Panc1 (cell line): ENCODE measurements at regions of chr7 and their contacts with region 1.

Region 1: GRCh38 chr7:116271963-116272839 is 61.9 kb downstream of the TES start:
- DNase-seq: peak; percentile 98
- ATAC-seq: peak; percentile 96
- H3K4me3 ChIP-seq: peak overlapping the region in 1 of 2 experiments; percentile 21; a peak in 3 of 4 replicates
- H3K27ac ChIP-seq: peak overlapping the region; percentile 100
- H3K4me1 ChIP-seq: peaks cover 46% of the 10 kb centered on the region
- H3K27me3 ChIP-seq: no peaks in the 10 kb centered on the region
- CTCF ChIP-seq: no peak

Region 2: GRCh38 chr7:116316833-116317612 is 44.8 kb after region 1 on chr7:
- CTCF ChIA-PET with region 1: no interaction called
- POLR2A ChIA-PET with region 1: interaction called, 3 read pairs
- in situ Hi-C with region 1: no loop called
- intact Hi-C with region 1: loop called (anchors 5 kb)
- DNase-seq: peak; percentile 99
- ATAC-seq: peak; percentile 97
- H3K4me3 ChIP-seq: peak overlapping the region; percentile 1 to 17; a peak in 3 of 4 replicates
- H3K27ac ChIP-seq: peak overlapping the region; percentile 97
- H3K4me1 ChIP-seq: peaks cover 29% of the 10 kb centered on the region
- H3K27me3 ChIP-seq: no peaks in the 10 kb centered on the region
- CTCF ChIP-seq: no peak

Region 3: DNA sequence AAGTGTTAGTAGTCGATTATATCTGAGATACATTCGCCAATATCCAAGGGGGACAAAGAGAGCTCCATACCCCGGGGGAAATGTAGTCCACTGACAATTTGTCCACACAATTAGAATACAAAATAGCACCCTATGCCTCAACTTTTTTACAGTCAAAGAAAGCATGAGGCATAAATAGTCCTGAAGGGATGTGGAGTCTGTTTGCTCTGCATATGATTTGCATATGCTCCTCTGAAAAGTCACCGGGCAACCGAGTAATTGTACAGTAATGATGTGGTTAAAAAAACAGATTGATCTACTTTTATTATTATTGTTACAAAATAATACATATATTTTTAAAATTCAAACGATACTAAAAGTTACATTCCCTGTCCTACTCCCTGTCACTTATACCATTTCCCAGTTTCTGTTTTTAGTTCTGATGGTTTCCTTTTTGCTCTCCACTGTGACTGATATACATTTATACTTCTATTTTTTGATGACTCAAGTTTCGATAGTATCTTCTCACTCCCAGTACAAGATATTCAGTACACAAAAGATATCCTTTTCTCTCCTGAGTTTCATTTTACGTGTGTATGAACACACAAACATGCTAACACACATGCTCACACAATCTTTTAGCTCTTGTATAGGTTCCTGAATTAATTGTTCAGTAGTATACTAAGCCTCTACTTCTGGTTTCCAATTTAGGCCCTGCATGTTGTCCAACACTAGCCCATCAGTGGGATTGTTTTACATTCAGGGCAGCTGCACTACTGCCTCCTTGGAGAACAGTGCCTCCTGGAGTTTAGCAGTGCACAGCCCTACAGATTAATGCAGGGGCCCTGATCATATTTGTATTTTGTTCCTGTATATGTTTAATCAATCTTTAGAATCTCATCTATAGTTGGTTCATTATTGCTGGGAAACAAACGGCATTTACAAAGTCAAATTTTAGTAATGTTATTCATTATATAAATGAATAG is 69.0 kb after region 1 on chr7:
- CTCF ChIA-PET with region 1: no interaction called
- POLR2A ChIA-PET with region 1: no interaction called
- in situ Hi-C with region 1: no loop called
- intact Hi-C with region 1: loop called (anchors 5 kb)
- DNase-seq: no peak
- ATAC-seq: peak; percentile 81
- H3K4me3 ChIP-seq: no peak overlapping the region
- H3K27ac ChIP-seq: peak overlapping the region; percentile 96
- H3K4me1 ChIP-seq: peaks cover 23% of the 10 kb centered on the region
- H3K27me3 ChIP-seq: no peaks in the 10 kb centered on the region
- CTCF ChIP-seq: peak; percentile 85

Region 4: DNA sequence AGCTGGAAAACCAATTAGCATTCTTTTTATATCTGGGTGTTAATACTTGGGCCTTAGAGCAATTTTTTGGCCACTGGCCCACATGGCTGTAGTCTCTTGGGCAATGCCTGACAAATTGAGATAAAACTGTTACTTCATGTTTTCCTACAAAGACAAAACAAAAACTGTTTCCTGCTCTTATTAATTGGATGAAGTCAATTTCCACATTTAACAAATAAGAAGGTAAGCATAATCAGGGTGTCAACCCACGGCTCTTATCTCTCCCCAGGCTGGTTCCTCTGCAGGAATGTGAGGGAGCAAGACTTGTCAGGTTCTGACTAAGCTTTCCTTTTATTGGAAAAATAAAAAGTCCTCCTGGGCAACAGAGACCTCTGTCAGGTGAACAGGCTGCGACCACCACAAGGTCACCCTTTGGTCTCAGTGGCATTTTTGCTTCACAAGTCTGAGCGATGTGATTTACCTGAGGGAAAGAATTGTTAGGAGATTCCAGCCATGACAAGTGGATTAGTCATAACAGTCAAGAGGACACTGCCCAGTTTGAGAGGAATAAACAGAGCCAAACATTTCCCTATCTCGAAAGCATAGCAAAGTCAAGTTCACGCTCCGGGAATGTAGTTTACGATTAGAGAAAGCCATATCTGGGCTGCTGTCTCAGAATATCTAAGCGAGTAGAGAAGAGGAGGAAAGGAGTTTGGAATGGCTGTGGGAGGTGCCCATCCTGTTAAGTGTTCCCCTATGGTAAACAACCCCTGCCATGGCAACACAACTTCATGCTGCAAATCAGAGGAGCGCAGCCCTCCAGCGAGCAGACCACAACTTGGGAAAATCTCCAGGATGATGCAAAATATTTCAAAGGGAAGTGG is 82.6 kb after region 1 on chr7:
- CTCF ChIA-PET with region 1: no interaction called
- POLR2A ChIA-PET with region 1: interaction called, 5 read pairs
- in situ Hi-C with region 1: no loop called
- intact Hi-C with region 1: loop called (anchors 5 kb)
- DNase-seq: peak; percentile 98
- ATAC-seq: peak; percentile 92
- H3K4me3 ChIP-seq: peak overlapping the region; percentile 12 to 49
- H3K27ac ChIP-seq: peak overlapping the region; percentile 100
- H3K4me1 ChIP-seq: peaks cover 49% of the 10 kb centered on the region
- H3K27me3 ChIP-seq: no peaks in the 10 kb centered on the region
- CTCF ChIP-seq: no peak

Region 5: DNA sequence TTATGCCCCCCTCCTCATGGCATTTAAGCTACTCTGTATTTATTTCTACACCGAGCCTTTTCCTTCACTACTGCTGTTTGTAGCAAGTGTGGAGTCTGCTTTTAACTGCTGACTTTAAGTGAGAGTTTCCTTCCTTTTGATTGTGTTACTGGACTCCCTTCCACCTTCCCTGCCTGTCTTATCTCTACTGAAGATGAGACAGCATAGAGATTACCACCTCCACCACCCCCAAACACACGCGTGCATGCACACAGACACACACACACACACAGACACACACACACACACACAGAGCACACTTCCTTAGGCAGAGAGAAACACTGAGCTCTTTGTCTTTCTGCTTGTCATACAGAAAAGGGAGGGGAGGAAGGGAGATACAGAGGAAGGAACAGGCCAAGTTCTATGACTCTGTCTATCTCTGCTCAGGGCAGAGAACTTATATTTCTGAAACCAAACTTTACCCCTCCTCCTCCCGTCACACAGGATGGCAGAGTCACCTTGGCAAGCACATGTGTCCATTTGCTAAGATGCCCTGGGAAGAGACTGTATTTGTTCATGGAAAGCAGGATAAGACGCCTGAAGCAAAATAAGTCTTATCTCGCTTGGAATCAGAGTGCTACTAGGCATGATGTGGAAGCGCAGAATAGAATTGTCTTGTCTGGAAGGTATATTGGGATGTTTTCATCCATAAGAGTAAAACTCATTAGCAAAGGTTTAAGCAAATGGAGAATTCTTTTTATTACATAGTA is 145.6 kb after region 1 on chr7:
- CTCF ChIA-PET with region 1: no interaction called
- POLR2A ChIA-PET with region 1: no interaction called
- in situ Hi-C with region 1: no loop called
- intact Hi-C with region 1: loop called (anchors 5 kb)
- DNase-seq: no peak
- ATAC-seq: peak; percentile 84
- H3K4me3 ChIP-seq: peak overlapping the region in 1 of 2 experiments; percentile 30; a peak in 1 of 4 replicates
- H3K27ac ChIP-seq: peak overlapping the region; percentile 94
- H3K4me1 ChIP-seq: peaks cover 41% of the 10 kb centered on the region
- H3K27me3 ChIP-seq: no peaks in the 10 kb centered on the region
- CTCF ChIP-seq: no peak

Region 6: DNA sequence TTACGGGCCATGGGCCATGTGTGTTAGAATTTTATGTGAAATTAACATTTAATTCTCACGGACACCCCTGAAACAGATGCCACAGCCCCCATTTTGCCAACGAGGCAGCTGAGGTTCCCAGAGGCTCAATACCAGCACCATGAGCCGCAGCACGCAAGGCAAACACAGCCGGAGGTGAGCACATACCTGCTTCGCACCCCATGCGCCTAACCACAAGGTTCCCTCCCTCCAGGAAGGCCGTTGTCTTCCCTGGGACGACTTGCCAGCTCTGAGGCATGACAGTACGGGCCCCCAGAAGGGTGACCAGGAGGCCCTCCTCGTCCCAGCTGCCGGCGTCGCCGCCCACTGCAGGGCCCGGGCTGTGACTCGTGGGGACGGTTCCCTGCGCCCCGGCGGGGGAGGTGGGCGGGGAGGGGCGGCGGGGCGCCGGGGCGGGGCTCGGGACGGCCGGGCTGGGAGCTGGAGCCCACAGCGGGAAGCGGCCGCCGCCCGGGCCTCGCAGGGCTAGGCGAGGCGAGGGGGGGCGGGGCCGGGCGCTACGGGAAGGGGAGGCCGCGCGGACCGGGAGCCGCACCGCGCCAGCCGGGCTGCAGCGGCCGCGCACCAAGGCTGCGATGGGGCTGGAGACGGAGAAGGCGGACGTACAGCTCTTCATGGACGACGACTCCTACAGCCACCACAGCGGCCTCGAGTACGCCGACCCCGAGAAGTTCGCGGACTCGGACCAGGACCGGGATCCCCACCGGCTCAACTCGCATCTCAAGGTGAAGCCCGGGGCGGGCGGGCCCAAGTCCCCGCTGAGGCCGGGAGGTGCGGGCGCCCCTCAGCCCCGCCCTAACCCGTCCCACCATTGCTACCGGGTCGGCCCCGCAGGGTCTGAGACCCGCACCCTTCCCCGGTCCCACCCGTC is 227.2 kb after region 1 on chr7 and contains the start of gene CAV2:
- CTCF ChIA-PET with region 1: no interaction called
- POLR2A ChIA-PET with region 1: interaction called, 8 read pairs
- in situ Hi-C with region 1: no loop called
- intact Hi-C with region 1: loop called (anchors 5 kb)
- DNase-seq: no peak
- ATAC-seq: peak; percentile 89
- H3K4me3 ChIP-seq: peak within 1 kb of the TSS; percentile 89 to 98
- H3K27ac ChIP-seq: peak within 1 kb of the TSS; percentile 100
- H3K4me1 ChIP-seq: peaks cover 44% of the 10 kb centered on the region
- H3K27me3 ChIP-seq: no peaks in the 10 kb centered on the region
- CTCF ChIP-seq: no peak
- total RNA-seq, gene CAV2: 217 TPM